Activated naive CD4-positive, alpha-beta T cell treated with anti-CD3 and anti-CD28 coated beads, Interleukin-2, amount 10 ng/mL, durations not matched to agents 7 days and 5 days (primary cell): ENCODE measurements at regions of chr19 and their contacts with region 1.

Region 1: DNA sequence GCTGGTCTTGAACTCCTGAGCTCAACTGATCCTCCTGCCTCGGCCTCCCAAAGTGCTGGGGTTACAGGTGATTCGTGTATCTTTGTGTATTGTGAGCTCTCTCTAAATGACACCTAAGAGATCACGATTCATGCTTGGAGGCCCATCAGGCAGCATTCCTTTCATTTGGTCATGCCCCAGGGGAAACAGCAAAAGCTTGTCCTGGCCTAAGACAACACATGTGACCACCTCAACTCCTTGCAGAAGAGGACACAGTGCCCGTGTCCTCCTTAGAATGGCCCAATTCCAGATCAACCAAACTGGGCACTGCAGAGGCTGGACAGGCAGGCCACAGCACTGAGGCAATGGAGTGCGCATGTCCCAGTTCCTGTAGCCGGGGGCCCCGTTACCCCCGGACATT is 32.5 kb downstream of the ZC3H4 start:
- DNase-seq: no peak
- H3K4me3 Mint-ChIP-seq: no peak overlapping the region
- H3K27ac Mint-ChIP-seq: peak overlapping the region; percentile 52
- H3K4me1 Mint-ChIP-seq: no peaks in the 10 kb centered on the region
- H3K27me3 Mint-ChIP-seq: no peaks in the 10 kb centered on the region

Region 2: GRCh38 chr19:47112997-47113849 is 32.1 kb after region 1 on chr19 and contains the start of gene ZC3H4:
- CTCF ChIA-PET with region 1: interaction called, 29 read pairs
- DNase-seq: peak; percentile 100
- H3K4me3 Mint-ChIP-seq: peak within 1 kb of the TSS; percentile 94
- H3K27ac Mint-ChIP-seq: peak within 1 kb of the TSS; percentile 100
- H3K4me1 Mint-ChIP-seq: peaks cover 33% of the 10 kb centered on the region
- H3K27me3 Mint-ChIP-seq: peaks cover 9% of the 10 kb centered on the region

Region 3: GRCh38 chr19:47124937-47125668 is 44.0 kb after region 1 on chr19:
- CTCF ChIA-PET with region 1: interaction called, 54 read pairs
- DNase-seq: no peak
- H3K4me3 Mint-ChIP-seq: no peak overlapping the region
- H3K27ac Mint-ChIP-seq: no peak overlapping the region
- H3K4me1 Mint-ChIP-seq: peaks cover 7% of the 10 kb centered on the region
- H3K27me3 Mint-ChIP-seq: peaks cover 10% of the 10 kb centered on the region